ENCODE measurements at regions of chr6 and their contacts with region 1.

Region 1: GRCh38 chr6:160992061-160992979 is 751 bp downstream of the MAP3K4 start:
- DNase-seq: peak; percentile 63
- ATAC-seq: peak; percentile 44
- H3K4me3 ChIP-seq: peak overlapping the region; percentile 88
- H3K27ac ChIP-seq: peak overlapping the region; percentile 82
- H3K4me1 ChIP-seq: peaks cover 18% of the 10 kb centered on the region
- H3K27me3 ChIP-seq: no peaks in the 10 kb centered on the region
- CTCF ChIP-seq: peak; percentile 73

Region 2: GRCh38 chr6:160733050-160733646 is 259.2 kb before region 1 on chr6:
- CTCF ChIA-PET with region 1: no interaction called
- POLR2A ChIA-PET with region 1: no interaction called
- intact Hi-C with region 1: loop called (anchors 2 kb)
- DNase-seq: peak; percentile 68
- ATAC-seq: peak; percentile 77
- H3K4me3 ChIP-seq: no peak overlapping the region
- H3K27ac ChIP-seq: no peak overlapping the region
- H3K4me1 ChIP-seq: peaks cover 6% of the 10 kb centered on the region; the same call in 1 of the 2 replicates
- H3K27me3 ChIP-seq: no peaks in the 10 kb centered on the region
- CTCF ChIP-seq: peak; percentile 76

Region 3: GRCh38 chr6:160810235-160810634 is 182.1 kb before region 1 on chr6:
- CTCF ChIA-PET with region 1: no interaction called
- POLR2A ChIA-PET with region 1: no interaction called
- intact Hi-C with region 1: loop called (anchors 5 kb)
- DNase-seq: peak; percentile 95
- ATAC-seq: peak; percentile 90
- H3K4me3 ChIP-seq: peak overlapping the region; percentile 47
- H3K27ac ChIP-seq: peak overlapping the region; percentile 99
- H3K4me1 ChIP-seq: peaks cover 51% of the 10 kb centered on the region
- H3K27me3 ChIP-seq: no peaks in the 10 kb centered on the region
- CTCF ChIP-seq: no peak

Region 4: DNA sequence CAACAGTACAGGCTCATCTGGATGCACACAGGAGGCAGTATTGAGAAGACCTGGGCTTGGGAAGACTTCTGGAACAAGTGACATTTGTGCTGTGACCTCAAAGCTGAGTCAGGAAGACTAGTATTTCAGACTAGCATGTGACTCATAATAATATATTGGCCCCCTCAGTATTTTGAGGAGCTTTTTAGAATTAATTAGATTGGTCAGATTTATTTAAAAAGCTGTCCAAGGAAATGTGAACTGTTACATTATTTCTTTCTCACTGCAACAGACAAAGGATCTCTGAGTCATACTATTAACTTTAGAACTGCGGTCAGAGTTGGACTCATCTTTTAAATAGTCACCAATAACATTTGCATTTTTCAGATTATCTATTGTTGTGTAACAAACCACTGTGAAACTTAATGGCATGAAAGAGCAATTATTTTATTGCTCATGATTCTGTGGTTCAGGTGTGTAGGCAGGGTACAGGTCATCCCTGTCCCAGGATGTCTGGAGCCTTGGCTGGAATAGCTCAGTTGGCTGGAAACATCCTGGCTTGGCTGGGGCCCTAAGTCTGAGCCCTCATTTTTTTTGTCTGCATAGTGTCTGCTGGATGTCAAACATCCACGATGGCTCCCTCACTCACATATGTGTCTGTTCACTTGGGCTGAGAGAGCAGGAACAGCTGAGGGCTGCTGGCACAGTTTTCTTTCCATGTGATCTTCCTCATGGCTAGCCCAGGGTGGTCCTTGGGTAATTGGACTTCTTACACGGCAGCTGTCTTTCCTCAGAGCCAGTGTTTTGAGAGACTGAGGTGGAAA is 46.1 kb after region 1 on chr6:
- CTCF ChIA-PET with region 1: interaction called, 4 read pairs
- POLR2A ChIA-PET with region 1: interaction called, 3 read pairs
- intact Hi-C with region 1: loop called (anchors 1 kb)
- DNase-seq: peak; percentile 93
- ATAC-seq: peak; percentile 91
- H3K4me3 ChIP-seq: no peak overlapping the region
- H3K27ac ChIP-seq: peak overlapping the region; percentile 99
- H3K4me1 ChIP-seq: peaks cover 32% of the 10 kb centered on the region
- H3K27me3 ChIP-seq: no peaks in the 10 kb centered on the region
- CTCF ChIP-seq: peak; percentile 56

Region 5: DNA sequence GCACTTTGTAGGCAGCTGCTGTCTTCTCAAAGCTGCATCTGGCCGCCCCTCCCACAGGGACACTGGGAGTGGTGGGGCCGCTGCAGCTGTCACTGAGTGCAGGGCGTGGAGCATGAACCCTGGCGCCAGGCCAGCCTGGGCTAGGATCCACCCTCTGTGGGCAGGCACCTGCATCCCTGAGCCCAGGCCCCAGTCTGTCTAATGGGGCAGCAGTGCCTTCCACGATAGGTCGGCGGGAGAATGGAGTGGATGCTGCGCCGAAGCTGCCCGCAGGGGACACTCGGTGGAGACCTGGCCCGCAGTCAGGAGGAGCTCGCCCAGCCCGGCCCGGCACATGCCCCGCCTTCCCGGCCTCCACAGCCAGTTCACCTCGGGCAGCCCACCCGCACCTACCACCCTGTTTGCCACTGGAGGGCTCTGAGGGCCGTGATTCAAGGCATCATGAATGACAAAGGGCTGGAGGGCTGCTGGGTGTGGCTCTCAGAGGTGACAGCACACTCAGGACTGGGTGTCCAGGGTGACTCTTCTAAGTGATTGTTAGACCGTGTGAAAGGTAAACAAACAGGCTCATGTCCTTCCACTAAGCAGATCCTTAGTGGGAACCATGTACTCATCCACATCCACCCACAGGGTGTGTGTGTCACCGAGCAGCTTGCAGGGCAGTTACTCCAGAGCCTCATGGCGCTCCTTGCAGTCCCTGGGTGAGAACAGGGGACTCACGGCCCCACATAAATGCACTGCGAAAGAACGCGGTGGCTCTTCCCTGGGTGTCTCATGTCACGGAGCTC is 147.6 kb after region 1 on chr6:
- CTCF ChIA-PET with region 1: no interaction called
- POLR2A ChIA-PET with region 1: no interaction called
- intact Hi-C with region 1: loop called (anchors 10 kb)
- DNase-seq: peak; percentile 50
- ATAC-seq: peak; percentile 67
- H3K4me3 ChIP-seq: no peak overlapping the region
- H3K27ac ChIP-seq: peak overlapping the region; percentile 86
- H3K4me1 ChIP-seq: peaks cover 33% of the 10 kb centered on the region
- H3K27me3 ChIP-seq: no peaks in the 10 kb centered on the region
- CTCF ChIP-seq: 0 out of 2 replicates have a peak, but pooled peaks have one; percentile 31

Region 6: DNA sequence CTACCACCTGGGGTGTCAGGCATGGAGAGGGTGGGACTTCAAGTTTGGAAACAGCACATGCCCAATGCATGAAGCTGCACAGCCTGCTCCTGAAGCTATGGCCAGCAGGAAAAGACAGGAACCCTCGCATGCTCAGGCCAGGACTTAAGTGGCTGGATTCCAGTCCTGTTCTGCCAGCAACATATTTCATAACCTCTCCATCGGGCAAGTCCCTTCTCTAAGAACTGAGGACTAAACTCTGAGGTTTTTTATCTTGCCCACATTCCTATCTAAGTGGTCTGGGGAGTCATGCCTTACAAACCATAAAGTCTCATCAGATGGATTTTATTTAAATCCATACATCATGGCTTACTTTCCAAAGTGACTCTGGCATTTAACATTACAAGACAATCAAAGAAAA is 309.0 kb after region 1 on chr6:
- CTCF ChIA-PET with region 1: no interaction called
- POLR2A ChIA-PET with region 1: no interaction called
- intact Hi-C with region 1: no loop called
- DNase-seq: no peak
- ATAC-seq: no peak
- H3K4me3 ChIP-seq: no peak overlapping the region
- H3K27ac ChIP-seq: no peak overlapping the region
- H3K4me1 ChIP-seq: peaks cover 11% of the 10 kb centered on the region; the same call in 1 of the 2 replicates
- H3K27me3 ChIP-seq: no peaks in the 10 kb centered on the region
- CTCF ChIP-seq: no peak

Region 7: DNA sequence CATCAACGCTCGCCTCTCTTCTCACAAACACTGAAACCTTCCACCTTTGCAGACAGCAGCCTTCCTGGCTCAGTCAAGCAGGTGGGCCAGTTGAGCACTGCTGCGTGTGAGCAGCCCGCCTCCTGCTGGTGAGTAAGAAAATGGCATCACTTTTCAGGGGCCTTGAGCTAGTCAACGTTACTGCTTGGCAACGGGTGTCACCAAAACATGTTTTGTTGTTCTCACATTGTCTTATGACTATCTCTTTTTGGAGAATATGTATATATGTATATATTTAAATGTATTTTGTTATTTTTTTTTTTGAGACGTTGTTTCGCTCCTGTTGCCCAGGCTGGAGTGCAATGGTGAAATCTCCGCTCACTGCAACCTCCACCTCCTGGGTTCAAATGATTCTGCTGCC is 378.6 kb after region 1 on chr6:
- CTCF ChIA-PET with region 1: no interaction called
- POLR2A ChIA-PET with region 1: no interaction called
- intact Hi-C with region 1: loop called (anchors 10 kb)
- DNase-seq: peak; percentile 75
- ATAC-seq: peak; percentile 58
- H3K4me3 ChIP-seq: no peak overlapping the region
- H3K27ac ChIP-seq: 0 out of 2 replicates have a peak overlapping the region, but pooled peaks have one; percentile 28
- H3K4me1 ChIP-seq: peaks cover 21% of the 10 kb centered on the region
- H3K27me3 ChIP-seq: no peaks in the 10 kb centered on the region
- CTCF ChIP-seq: peak; percentile 84

Region 8: DNA sequence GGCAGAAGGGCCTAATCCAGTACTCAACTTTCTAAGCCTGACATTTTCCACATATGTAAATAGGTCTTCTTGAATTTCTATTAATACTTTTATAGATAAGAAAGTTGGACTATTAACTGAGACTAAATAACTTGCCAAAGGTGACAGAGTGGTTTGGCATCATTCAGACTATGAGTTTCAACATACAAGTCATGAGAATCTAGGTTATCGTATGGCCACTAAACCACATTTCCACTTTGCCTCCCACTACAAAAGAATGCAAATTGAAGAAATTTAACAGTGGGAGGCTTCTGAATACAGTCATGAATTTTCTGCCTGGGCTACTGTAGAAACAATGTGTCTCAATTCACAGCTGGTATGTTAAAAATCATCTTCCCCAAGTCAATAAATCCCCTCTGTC is 812.5 kb after region 1 on chr6:
- CTCF ChIA-PET with region 1: no interaction called
- POLR2A ChIA-PET with region 1: no interaction called
- intact Hi-C with region 1: no loop called
- DNase-seq: no peak
- ATAC-seq: no peak
- H3K4me3 ChIP-seq: no peak overlapping the region
- H3K27ac ChIP-seq: no peak overlapping the region
- H3K4me1 ChIP-seq: no peaks in the 10 kb centered on the region
- H3K27me3 ChIP-seq: peaks cover 15% of the 10 kb centered on the region; the same call in 1 of the 2 replicates
- CTCF ChIP-seq: no peak

Measured in PC-3 (cell line).